CD4-positive, alpha-beta memory T cell (primary cell): ENCODE measurements at regions of chr21 and their contacts with region 1.

Region 1: DNA sequence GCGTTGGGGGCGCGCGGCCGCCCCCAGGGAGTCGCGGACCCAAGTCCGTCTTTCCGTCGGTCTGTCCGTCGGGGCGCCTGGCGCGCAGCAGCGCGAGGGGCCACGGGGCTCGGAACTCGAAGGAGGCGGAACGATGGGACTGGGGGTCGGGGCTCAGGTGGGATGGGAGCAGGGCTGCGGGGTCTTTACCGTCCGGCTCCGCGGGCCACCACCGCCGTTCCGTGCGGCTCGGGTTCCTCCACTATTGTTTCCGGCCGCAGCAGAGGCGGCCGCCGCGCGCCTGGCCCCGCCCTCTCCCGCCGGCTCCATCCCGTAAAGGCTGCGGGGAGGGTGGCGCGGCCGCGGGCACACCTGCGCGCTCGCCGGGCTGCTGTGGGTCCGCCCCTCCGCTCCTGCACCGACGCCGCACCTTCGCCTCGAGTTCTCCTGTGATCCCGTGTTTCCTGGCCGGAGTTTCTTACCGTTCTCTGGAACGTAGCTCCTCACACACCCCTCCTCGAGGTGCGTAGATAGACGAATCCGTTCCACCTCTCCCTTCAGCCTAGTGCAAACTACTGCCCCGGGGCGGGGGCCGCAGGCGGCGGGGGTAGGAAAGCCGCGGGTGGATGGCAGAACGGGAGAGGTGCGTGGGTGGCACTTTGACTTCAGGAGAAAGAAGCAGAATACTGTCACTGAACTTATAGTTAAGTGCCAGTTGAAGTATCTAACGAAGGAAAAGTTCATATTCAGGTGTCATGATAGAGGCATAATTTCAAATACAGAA is at the start of gene C21orf91:
- DNase-seq: peak; percentile 91 to 93 (median 92)
- H3K4me3 ChIP-seq: peak within 1 kb of the TSS; percentile 70 to 92
- H3K4me3 Mint-ChIP-seq: peak within 1 kb of the TSS; percentile 89 to 100 (median 98)
- H3K27ac ChIP-seq: peak within 1 kb of the TSS; percentile 96
- H3K27ac Mint-ChIP-seq: peak within 1 kb of the TSS; percentile 97 to 100 (median 100)
- H3K4me1 ChIP-seq: peaks cover 48% of the 10 kb centered on the region
- H3K4me1 Mint-ChIP-seq: peaks cover 31 to 53% (median 42%) of the 10 kb centered on the region in 4 donors
- H3K27me3 ChIP-seq: no peaks in the 10 kb centered on the region
- H3K27me3 Mint-ChIP-seq: no peaks in the 10 kb centered on the region
- total RNA-seq, gene C21orf91: 80.1 to 80.5 TPM

Region 2: DNA sequence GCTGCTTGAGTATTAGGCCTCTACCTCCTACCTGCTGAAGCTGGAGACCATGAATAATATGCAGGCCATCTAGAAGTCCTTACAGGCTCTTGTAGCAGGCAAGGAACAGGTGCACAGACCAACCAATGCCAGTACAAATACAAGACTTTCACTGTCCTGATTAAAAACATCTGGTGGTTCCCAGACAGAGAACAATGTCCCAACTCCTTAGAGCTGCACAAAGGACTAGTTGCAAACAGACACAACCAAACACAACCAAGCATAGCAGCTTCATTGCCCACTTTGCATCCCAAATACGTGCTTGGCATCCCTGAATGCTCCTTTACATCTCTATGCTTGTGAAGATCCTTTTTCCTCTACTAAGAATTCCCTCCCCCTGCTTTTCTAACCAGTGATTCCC is 404.5 kb before region 1 on chr21:
- CTCF ChIA-PET with region 1: no interaction called
- POLR2A ChIA-PET with region 1: no interaction called
- intact Hi-C with region 1: no loop called
- DNase-seq: no peak
- H3K4me3 ChIP-seq: no peak overlapping the region
- H3K4me3 Mint-ChIP-seq: no peak overlapping the region
- H3K27ac ChIP-seq: no peak overlapping the region
- H3K27ac Mint-ChIP-seq: no peak overlapping the region
- H3K4me1 ChIP-seq: no peaks in the 10 kb centered on the region
- H3K4me1 Mint-ChIP-seq: no peaks in the 10 kb centered on the region
- H3K27me3 ChIP-seq: no peaks in the 10 kb centered on the region
- H3K27me3 Mint-ChIP-seq: peaks cover 5% of the 10 kb centered on the region in 2 donors

Region 3: DNA sequence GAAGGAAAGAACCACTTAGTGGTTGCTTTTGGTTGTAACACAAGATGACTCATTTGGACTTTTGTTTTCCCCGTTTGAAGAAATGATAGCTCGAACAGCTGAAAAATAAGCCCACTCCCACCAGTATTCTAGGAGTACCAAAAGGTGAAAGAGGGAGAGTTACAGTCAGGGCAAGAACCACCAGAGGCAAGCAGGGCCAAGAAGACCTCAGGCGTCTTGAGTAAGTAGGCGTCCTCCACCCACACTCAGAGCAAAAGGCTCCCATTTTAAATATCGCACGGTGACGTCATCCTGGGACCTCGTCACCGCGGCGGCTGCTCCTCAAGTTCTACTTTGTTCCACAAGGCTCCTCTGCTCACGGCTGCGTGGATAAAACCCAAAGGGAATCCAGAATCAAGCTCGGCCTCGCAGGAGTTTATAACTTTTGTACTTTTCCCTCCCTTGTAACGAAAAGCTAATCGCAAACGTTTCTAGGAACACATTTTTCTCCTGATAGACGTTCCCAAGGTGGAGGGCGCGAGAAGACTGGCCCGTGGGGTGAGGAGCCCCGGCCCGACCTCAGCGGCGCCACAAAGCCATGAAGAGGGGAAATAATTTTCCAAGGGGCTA is 207.8 kb before region 1 on chr21:
- CTCF ChIA-PET with region 1: no interaction called
- POLR2A ChIA-PET with region 1: interaction called, 15 read pairs
- intact Hi-C with region 1: loop called (anchors 1 kb)
- DNase-seq: peak; percentile 80 to 91 (median 84)
- H3K4me3 ChIP-seq: peak overlapping the region; percentile 87 to 97
- H3K4me3 Mint-ChIP-seq: peak overlapping the region; percentile 91 to 99 (median 95)
- H3K27ac ChIP-seq: peak overlapping the region; percentile 84
- H3K27ac Mint-ChIP-seq: peak overlapping the region; percentile 95 to 100 (median 99)
- H3K4me1 ChIP-seq: peaks cover 27% of the 10 kb centered on the region
- H3K4me1 Mint-ChIP-seq: peaks cover 17 to 50% (median 25%) of the 10 kb centered on the region in 4 donors
- H3K27me3 ChIP-seq: no peaks in the 10 kb centered on the region
- H3K27me3 Mint-ChIP-seq: no peaks in the 10 kb centered on the region

Region 4: GRCh38 chr21:17660449-17660848 is 158.8 kb before region 1 on chr21:
- CTCF ChIA-PET with region 1: no interaction called
- POLR2A ChIA-PET with region 1: no interaction called
- intact Hi-C with region 1: no loop called
- DNase-seq: no peak
- H3K4me3 ChIP-seq: no peak overlapping the region
- H3K4me3 Mint-ChIP-seq: no peak overlapping the region
- H3K27ac ChIP-seq: no peak overlapping the region
- H3K27ac Mint-ChIP-seq: no peak overlapping the region
- H3K4me1 ChIP-seq: no peaks in the 10 kb centered on the region
- H3K4me1 Mint-ChIP-seq: no peaks in the 10 kb centered on the region
- H3K27me3 ChIP-seq: no peaks in the 10 kb centered on the region
- H3K27me3 Mint-ChIP-seq: peaks cover 22 to 25% of the 10 kb centered on the region in 2 donors

Region 5: GRCh38 chr21:17688912-17689874 is 130.1 kb before region 1 on chr21:
- CTCF ChIA-PET with region 1: interaction called, 17 read pairs
- POLR2A ChIA-PET with region 1: interaction called, 17 read pairs
- intact Hi-C with region 1: loop called (anchors 1 kb)
- DNase-seq: peak; percentile 35 to 59 (median 43)
- H3K4me3 ChIP-seq: no peak overlapping the region
- H3K4me3 Mint-ChIP-seq: peak overlapping the region in 4 of 8 donors; percentile 9 to 35 (median 20)
- H3K27ac ChIP-seq: no peak overlapping the region
- H3K27ac Mint-ChIP-seq: peak overlapping the region in 4 of 7 donors; percentile 18 to 66 (median 52)
- H3K4me1 ChIP-seq: peaks cover 27% of the 10 kb centered on the region
- H3K4me1 Mint-ChIP-seq: peaks cover 29 to 51% (median 39%) of the 10 kb centered on the region in 4 donors
- H3K27me3 ChIP-seq: no peaks in the 10 kb centered on the region
- H3K27me3 Mint-ChIP-seq: no peaks in the 10 kb centered on the region

Region 6: DNA sequence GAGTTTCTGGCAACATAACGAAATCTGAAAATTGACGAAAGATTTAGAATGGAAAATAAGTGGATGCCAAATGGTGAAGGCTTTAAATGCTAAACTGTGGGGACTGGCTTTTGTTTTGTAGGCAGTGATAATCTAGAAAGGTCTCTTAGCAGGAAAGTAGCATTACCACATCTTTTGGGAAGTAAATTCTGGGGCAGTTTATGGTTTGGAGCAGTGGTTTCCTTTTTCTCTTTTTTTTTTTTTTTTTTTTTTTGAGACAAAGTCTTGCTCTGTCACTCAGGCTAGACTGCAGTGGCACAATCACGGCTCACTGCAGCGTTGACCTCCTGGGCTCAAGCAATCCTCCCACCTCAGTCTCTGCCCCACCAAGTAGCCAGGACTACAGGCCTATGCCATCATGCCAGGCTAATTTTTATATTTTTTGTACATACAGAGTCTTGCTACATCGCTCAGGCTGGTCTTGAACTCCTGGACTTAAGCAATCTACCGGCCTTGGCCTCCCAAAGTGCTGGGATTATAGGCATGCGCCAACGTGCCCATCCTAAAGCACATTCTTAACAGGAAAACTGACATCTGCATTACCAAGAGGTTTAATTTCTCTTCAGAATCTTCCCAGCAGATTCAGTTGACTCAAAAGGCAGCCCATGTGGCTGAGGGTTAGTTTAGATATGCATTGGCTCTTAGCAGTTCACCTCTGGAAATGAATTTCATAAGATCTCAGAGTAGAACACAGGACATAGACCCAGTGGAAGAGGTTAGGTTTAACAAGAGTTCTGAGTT is 33.0 kb before region 1 on chr21:
- CTCF ChIA-PET with region 1: interaction called, 27 read pairs
- POLR2A ChIA-PET with region 1: interaction called, 124 read pairs
- intact Hi-C with region 1: no loop called
- DNase-seq: no peak
- H3K4me3 ChIP-seq: no peak overlapping the region
- H3K4me3 Mint-ChIP-seq: peak overlapping the region in 7 of 8 donors; percentile 49 to 88 (median 66)
- H3K27ac ChIP-seq: peak overlapping the region; percentile 71
- H3K27ac Mint-ChIP-seq: peak overlapping the region; percentile 87 to 97 (median 94)
- H3K4me1 ChIP-seq: peaks cover 95% of the 10 kb centered on the region
- H3K4me1 Mint-ChIP-seq: peaks cover 72 to 97% (median 85%) of the 10 kb centered on the region in 4 donors
- H3K27me3 ChIP-seq: no peaks in the 10 kb centered on the region
- H3K27me3 Mint-ChIP-seq: no peaks in the 10 kb centered on the region

Region 7: GRCh38 chr21:17802572-17802971 is 16.7 kb before region 1 on chr21:
- CTCF ChIA-PET with region 1: interaction called, 7 read pairs
- POLR2A ChIA-PET with region 1: interaction called, 39 read pairs
- intact Hi-C with region 1: loop called (anchors 1 kb)
- DNase-seq: no peak
- H3K4me3 ChIP-seq: no peak overlapping the region
- H3K4me3 Mint-ChIP-seq: peak overlapping the region in 2 of 8 donors; percentile 4 to 25
- H3K27ac ChIP-seq: no peak overlapping the region
- H3K27ac Mint-ChIP-seq: peak overlapping the region; percentile 26 to 84 (median 75)
- H3K4me1 ChIP-seq: peaks cover 68% of the 10 kb centered on the region
- H3K4me1 Mint-ChIP-seq: peaks cover 40 to 65% (median 53%) of the 10 kb centered on the region in 4 donors
- H3K27me3 ChIP-seq: no peaks in the 10 kb centered on the region
- H3K27me3 Mint-ChIP-seq: no peaks in the 10 kb centered on the region